Stomach (tissue), 19 donors: ENCODE measurements at regions of chr12 and their contacts with region 1.

Region 1: GRCh38 chr12:125183187-125184067 is 118.2 kb downstream of the AACS start:
- DNase-seq: peak; percentile 83 to 94
- H3K4me3 ChIP-seq: peak overlapping the region in 1 of 4 donors; percentile 14
- H3K27ac ChIP-seq: no peak overlapping the region
- H3K4me1 ChIP-seq: peaks cover 30 to 48% (median 43%) of the 10 kb centered on the region in 4 donors
- H3K27me3 ChIP-seq: peaks cover 0 to 84% (median 28%) of the 10 kb centered on the region in 3 donors
- CTCF ChIP-seq: peak in 6 of 7 experiments; percentile 96 to 100 (median 98)
- EP300 ChIP-seq: no peak
- POLR2A ChIP-seq: no peak

Region 2: DNA sequence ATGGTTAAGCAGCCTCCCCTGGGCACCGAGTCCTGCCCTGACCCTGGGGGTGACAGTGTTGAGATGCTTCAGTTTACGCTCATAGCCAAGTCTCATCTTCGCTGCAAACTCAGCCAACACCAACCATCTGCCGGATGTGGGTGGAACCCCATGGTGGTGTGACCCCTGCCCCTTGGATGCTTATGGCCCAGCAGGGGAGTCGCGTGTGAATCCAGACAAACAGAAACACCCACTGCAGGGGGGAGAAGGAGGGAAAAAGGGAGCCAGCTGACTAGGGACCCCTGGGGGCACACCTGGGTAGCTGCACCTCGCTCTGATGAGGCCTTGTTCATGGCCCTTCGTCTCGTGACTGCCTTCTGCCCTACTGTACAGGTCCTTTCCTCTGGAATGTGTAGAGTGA is 94.3 kb before region 1 on chr12:
- intact Hi-C with region 1: no loop called
- DNase-seq: no peak
- H3K4me3 ChIP-seq: no peak overlapping the region
- H3K27ac ChIP-seq: no peak overlapping the region
- H3K4me1 ChIP-seq: peaks cover 10 to 25% (median 22%) of the 10 kb centered on the region in 4 donors
- H3K27me3 ChIP-seq: no peaks in the 10 kb centered on the region
- CTCF ChIP-seq: no peak
- EP300 ChIP-seq: no peak
- POLR2A ChIP-seq: no peak

Region 3: DNA sequence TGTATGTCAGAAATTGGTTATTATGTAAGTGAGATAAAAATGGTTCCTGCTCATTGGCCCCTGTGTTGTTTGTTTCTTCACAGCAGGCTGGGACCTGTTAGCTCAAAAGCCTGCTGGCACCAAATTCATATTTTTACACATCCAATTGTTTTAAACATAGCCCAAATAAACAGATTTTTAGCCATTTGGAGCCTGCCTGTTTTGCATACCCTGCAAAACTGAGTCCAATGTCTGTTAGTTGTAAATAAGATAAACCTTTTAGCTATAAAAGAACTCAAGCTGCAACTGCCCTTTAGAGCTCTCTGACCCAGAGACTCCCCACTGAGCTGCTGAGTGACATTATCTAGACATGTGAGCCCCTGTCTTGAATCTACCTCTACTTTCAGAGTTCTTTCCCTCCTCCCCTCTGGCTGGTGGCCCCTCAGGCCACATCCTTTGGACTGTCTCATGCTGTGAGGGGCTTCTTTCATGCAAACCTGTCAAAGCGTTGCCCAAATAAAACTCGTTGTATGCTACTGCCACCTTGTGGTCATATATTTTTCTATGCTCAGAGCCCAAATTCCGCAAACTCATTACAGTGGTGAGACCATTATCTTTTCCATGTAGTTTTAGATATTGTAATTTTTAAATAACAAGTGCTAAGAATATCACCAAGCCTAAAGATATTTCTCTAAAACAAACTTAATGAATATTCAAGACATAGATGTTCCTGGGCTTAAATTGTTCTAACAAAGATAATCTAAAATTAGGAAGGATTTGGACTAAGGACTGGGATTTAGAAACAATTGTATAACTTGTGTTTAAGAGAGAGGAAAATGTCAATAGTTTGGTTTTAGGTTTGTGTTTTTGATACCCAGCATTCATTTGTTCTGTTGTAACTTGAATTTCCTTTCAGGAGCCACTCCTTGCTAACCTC is 219.7 kb after region 1 on chr12:
- intact Hi-C with region 1: loop called (anchors 5 kb)
- DNase-seq: peak in 1 of 2 donors; percentile 33
- H3K4me3 ChIP-seq: no peak overlapping the region
- H3K27ac ChIP-seq: no peak overlapping the region
- H3K4me1 ChIP-seq: no peaks in the 10 kb centered on the region
- H3K27me3 ChIP-seq: peaks cover 0 to 18% (median 0%) of the 10 kb centered on the region in 3 donors
- CTCF ChIP-seq: peak in 4 of 7 experiments; percentile 24 to 54 (median 40)
- EP300 ChIP-seq: no peak
- POLR2A ChIP-seq: no peak

Region 4: DNA sequence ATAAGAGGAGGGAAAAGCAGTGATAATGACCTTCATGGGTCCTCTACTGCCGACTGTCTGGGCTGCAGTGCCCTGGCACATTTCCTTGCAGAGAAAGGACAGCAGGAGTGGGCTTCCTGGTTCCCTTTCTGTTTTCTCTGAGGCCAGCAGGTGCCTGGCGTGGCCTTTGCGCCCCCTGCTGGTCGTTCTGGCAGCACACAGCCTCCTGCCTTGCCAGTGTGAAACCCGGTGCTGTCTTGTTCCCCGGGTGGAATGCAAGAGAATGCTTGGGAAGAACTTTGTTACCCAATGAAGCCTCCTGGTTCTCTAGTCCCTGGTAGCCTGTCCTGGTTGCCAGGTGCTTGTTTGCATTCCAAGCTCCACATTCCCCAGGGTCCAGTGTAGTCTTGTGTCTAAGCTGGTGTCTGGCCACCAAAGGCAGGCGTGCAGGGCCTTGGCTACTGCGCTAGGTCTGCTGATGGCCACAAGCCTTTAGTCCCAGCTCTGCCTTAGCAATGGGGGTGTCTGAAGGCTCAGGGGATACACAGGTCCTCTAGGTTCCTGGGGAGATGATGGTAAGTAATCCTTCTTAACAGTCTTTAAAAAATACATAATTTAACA is 1691.1 kb after region 1 on chr12:
- intact Hi-C with region 1: loop called (anchors 10 kb)
- DNase-seq: peak; percentile 65 to 88
- H3K4me3 ChIP-seq: no peak overlapping the region
- H3K27ac ChIP-seq: no peak overlapping the region
- H3K4me1 ChIP-seq: no peaks in the 10 kb centered on the region
- H3K27me3 ChIP-seq: peaks cover 0 to 12% (median 0%) of the 10 kb centered on the region in 3 donors
- CTCF ChIP-seq: peak in 5 of 7 experiments; percentile 30 to 88 (median 79)
- EP300 ChIP-seq: no peak
- POLR2A ChIP-seq: no peak